Psoas muscle (tissue), 8 donors: ENCODE measurements at regions of chr12 and their contacts with region 1.

Region 1: DNA sequence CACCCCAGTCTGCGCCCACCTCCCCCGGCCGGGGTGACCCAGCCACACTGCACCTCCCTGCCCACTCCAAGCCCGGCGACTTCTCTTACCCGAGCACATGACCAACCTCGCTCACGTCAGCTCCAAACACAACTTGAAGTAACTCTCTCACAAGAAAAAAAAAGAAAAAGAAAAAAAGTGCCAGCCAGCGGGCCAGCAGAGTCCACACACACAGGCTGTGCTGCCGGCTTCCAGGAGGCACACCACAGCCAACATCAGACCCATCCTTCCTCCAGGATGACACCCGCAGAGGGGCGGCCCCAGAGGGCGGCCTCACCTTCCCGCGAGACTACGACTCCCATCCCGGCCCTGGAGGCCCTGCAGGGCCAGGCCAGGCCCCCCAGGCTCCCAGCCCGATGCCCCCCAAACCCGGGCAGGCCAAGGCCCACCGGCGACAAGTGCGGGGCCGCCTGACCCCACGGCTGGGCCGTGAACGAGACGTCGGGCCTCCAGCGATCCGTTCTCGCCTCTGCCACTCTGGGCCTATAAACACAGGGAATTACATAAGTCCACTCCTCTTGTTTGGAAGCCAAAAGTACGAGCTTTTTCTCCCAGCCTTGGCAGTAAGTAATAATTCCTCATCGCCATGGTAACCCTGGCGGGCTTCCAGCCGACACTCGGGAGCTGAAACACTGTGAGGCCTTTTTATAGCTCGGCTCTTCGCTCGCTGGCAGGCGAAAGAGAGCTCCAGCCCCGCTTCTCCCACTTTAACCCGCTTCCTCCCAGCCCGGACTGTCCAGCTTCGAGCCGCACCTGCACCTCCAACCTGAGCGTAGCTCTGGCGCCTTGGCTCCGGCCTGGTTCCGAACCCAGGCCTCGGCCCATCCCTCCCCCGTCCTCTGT is 49.1 kb downstream of the NCOR2 start:
- DNase-seq: peak; percentile 98 to 99
- ATAC-seq: peak; percentile 70 to 74 (median 71)
- H3K4me3 ChIP-seq: peak overlapping the region; percentile 79
- H3K27ac ChIP-seq: peak overlapping the region; percentile 97
- H3K4me1 ChIP-seq: peaks cover 77% of the 10 kb centered on the region
- H3K27me3 ChIP-seq: no peaks in the 10 kb centered on the region
- CTCF ChIP-seq: no peak

Region 2: GRCh38 chr12:124369055-124369900 is 149.0 kb before region 1 on chr12:
- intact Hi-C with region 1: loop called in 1 of 2 experiments (anchors 10 kb)
- DNase-seq: peak; percentile 94 to 99
- ATAC-seq: peak; percentile 85 to 87 (median 86)
- H3K4me3 ChIP-seq: peak overlapping the region; percentile 35
- H3K27ac ChIP-seq: peak overlapping the region; percentile 95
- H3K4me1 ChIP-seq: peaks cover 71% of the 10 kb centered on the region
- H3K27me3 ChIP-seq: no peaks in the 10 kb centered on the region
- CTCF ChIP-seq: peak; percentile 56

Region 3: DNA sequence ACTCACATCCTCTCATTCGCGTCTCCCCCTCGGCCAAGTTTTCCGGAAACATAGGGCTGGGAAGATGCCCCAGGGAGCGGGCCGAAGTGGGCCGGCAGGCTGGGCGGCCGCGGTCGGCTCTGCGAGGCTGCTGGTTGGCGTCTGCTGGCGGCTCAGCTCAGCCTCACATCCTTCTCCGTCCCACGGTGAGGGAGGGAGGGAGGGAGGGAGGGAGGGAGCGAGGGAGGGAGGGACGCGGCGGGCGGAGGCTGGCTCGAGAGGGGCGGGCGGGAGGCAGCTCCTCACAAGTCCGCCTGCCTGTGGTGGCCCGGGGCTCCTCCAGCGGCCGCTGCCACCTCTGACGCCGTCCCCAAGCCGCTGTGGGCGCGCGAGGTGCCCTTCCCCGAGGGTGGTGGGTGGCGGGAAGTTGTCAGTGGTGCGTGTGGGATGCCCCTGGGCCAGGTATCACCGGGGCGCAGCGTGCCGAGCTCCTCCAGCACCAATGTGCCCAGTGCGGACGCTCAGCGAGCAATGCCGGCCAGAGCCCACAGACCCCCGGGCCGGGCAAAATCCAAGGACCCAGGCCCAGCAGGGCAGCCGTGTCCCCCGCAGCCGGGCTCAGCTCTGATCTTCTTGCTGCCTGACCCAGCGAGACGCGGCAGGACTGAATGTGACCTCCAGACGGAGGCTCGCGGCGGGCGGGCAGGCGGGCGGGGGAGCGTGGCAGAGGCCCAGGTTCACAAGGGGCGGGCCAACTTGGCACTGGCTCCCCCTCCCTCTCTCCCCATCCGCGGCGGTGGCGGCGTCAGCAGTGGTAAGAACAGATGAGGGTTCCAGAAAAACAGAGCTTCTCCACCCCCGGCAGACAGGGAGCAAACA is 129.4 kb before region 1 on chr12:
- intact Hi-C with region 1: loop called in 1 of 2 experiments (anchors 5 kb)
- DNase-seq: peak; percentile 92 to 96
- ATAC-seq: peak; percentile 52 to 65 (median 55)
- H3K4me3 ChIP-seq: peak overlapping the region; percentile 79
- H3K27ac ChIP-seq: peak overlapping the region; percentile 96
- H3K4me1 ChIP-seq: peaks cover 75% of the 10 kb centered on the region
- H3K27me3 ChIP-seq: no peaks in the 10 kb centered on the region
- CTCF ChIP-seq: no peak

Region 4: DNA sequence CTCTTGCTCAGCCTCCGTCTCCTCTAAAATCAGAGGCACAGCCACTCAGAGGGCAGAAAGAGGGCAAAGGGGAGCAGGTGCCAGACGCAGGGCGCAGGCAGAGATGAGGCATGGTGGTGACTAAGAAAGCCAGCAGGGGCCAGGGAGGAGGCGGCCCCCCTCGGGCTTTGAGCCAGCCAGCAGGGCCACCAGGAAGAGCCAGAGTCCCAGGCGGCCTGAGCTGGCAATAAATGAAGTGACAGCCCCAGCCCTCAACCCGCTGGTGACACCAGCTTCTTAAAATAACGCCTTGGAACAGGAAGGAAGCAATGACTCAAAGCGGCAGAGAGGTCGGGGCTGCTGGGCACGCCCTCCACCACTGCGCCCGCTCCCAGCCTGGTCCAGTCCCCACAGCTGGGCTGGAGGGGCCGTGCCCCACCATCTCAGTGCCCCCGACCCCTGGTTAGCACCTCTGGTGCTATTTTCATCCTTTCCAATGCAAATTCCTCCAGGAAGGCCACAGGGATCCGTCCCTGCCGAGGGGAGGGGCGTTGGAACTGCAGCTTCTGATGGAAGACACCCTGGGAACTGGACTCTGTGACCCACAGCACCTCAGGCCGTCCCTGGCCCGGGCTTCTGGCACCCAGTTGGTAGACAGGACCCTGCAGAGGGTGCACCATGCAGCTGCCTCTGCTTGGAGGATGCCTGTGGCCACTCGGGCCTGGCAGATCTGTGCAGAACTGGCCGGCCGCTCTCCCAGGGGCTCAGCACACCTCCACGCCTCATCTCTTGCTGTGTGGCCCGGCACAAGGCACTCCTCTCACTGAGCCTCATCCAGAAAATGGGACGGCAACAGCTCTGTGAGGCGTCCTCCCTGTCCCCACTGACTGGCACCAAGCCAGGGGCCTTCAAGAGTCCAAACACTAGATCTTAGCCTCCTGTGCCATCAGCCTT is 64.6 kb before region 1 on chr12:
- intact Hi-C with region 1: loop called (anchors 2 to 5 kb)
- DNase-seq: peak; percentile 93 to 97
- ATAC-seq: peak; percentile 82 to 86 (median 82)
- H3K4me3 ChIP-seq: peak overlapping the region; percentile 40
- H3K27ac ChIP-seq: peak overlapping the region; percentile 87
- H3K4me1 ChIP-seq: peaks cover 52% of the 10 kb centered on the region
- H3K27me3 ChIP-seq: no peaks in the 10 kb centered on the region
- CTCF ChIP-seq: no peak

Region 5: GRCh38 chr12:124754949-124755800 is 236.9 kb after region 1 on chr12:
- intact Hi-C with region 1: loop called in 1 of 2 experiments (anchors 5 kb)
- DNase-seq: peak; percentile 84 to 92
- ATAC-seq: peak; percentile 78 to 91 (median 88)
- H3K4me3 ChIP-seq: no peak overlapping the region
- H3K27ac ChIP-seq: peak overlapping the region; percentile 77
- H3K4me1 ChIP-seq: peaks cover 32% of the 10 kb centered on the region
- H3K27me3 ChIP-seq: no peaks in the 10 kb centered on the region
- CTCF ChIP-seq: no peak